WTC11 (cell line): ENCODE measurements at regions of chr3 and their contacts with region 1.

Region 1: DNA sequence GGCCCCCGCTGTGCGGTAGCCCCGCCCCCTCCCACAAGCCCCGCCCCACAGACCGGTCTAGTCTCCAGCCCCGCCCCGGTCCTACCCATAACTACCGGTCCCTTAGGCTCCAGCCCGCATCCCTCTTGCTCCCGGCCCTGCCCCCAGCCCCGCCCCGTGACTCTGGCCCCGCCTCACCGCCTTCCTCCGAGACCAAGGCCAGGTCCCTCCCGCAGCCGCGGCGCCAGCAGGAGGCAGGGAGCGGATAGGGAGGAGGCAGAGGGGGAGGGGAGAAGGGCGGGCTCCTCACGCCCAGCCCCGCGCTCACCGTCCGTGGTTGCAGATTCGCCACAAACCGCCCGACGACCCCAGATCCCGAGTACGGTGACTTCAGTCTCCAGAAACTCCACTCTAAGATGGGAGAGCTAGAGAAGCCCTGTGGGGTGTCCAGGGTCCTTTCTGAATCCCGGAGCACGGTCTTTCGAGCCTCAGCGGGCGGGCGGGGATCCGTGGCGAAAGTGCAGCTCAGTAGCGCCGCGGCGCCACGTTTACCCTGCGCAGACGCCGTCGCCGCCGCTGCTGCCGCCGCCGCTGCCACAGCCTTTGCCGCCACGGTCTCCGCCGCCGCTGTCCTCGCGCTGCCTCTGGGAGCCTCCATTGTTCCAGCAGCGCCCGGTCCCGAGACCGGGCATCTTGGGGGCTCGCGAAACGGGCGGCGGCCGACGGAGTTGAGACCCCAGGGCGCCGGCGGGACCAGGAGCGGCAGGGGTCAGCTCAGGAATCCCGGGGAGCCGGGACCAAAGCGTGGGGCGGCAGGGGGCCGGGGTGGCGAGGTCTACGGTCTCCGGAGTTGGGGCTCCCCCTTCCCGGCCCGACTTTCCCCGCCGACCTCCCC is at the start of gene BRPF1:
- DNase-seq: peak; percentile 99
- ATAC-seq: peak; percentile 94
- H3K4me3 Mint-ChIP-seq: peak within 1 kb of the TSS; percentile 91
- H3K27ac Mint-ChIP-seq: peak within 1 kb of the TSS; percentile 96
- H3K4me1 Mint-ChIP-seq: peaks cover 18% of the 10 kb centered on the region
- H3K27me3 Mint-ChIP-seq: no peaks in the 10 kb centered on the region
- CTCF ChIP-seq: no peak
- total RNA-seq, gene BRPF1: 20.4 to 22.8 TPM (median 21.4 TPM) in 3 replicates

Region 2: GRCh38 chr3:9503283-9503682 is 228.2 kb before region 1 on chr3:
- CTCF ChIA-PET with region 1: interaction called, 162 read pairs
- POLR2A ChIA-PET with region 1: interaction called, 3 read pairs
- DNase-seq: peak; percentile 95
- ATAC-seq: peak; percentile 61
- H3K4me3 Mint-ChIP-seq: no peak overlapping the region; the same call in 1 of the 2 replicates
- H3K27ac Mint-ChIP-seq: no peak overlapping the region
- H3K4me1 Mint-ChIP-seq: peaks cover 12% of the 10 kb centered on the region
- H3K27me3 Mint-ChIP-seq: peaks cover 51% of the 10 kb centered on the region
- CTCF ChIP-seq: peak; percentile 96

Region 3: DNA sequence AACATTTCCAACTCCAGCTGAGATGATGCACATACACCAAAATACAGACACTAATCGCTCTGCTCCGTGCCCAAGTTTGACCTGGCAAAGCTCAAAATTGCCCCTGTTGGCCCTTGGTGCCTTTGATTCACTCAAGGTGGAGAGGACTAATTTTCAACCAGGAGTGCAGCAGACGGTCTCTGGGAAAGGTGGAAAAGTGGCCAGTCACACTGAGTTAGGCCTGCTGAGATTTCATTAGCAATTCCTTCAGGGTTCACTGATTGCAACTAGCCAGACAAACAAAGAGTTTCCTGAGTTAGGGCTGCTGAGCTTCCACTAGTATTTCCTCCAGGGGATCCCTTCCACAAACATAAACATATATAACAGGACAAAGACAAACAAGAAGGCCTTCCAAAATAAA is 149.1 kb before region 1 on chr3:
- CTCF ChIA-PET with region 1: interaction called, 18 read pairs
- POLR2A ChIA-PET with region 1: no interaction called
- DNase-seq: no peak
- ATAC-seq: peak; percentile 85
- H3K4me3 Mint-ChIP-seq: peak overlapping the region; percentile 36
- H3K27ac Mint-ChIP-seq: peak overlapping the region; percentile 91
- H3K4me1 Mint-ChIP-seq: peaks cover 23% of the 10 kb centered on the region
- H3K27me3 Mint-ChIP-seq: peaks cover 5% of the 10 kb centered on the region
- CTCF ChIP-seq: no peak

Region 4: DNA sequence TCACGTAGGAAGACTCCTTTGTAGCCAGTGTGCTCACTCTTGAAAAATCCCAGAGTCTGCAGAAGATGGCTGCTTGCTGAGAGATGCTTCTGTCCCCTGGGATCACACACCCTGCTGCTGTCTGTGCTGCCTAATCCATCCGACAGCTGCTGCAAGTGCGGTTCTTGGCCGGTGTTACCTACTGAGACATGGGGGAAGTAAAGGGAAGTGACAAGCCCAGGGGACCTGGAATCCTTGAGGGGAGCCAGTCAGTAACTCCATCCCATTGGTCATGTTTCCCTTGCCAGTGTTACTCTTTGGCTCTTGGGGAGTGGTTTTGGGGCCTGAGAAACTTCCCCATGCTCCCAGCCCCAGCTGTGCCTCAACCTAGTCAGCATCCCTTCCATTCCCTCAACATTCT is 36.1 kb before region 1 on chr3:
- CTCF ChIA-PET with region 1: interaction called, 12 read pairs
- POLR2A ChIA-PET with region 1: no interaction called
- DNase-seq: no peak
- ATAC-seq: no peak
- H3K4me3 Mint-ChIP-seq: no peak overlapping the region
- H3K27ac Mint-ChIP-seq: no peak overlapping the region
- H3K4me1 Mint-ChIP-seq: no peaks in the 10 kb centered on the region
- H3K27me3 Mint-ChIP-seq: no peaks in the 10 kb centered on the region
- CTCF ChIP-seq: no peak

Region 5: DNA sequence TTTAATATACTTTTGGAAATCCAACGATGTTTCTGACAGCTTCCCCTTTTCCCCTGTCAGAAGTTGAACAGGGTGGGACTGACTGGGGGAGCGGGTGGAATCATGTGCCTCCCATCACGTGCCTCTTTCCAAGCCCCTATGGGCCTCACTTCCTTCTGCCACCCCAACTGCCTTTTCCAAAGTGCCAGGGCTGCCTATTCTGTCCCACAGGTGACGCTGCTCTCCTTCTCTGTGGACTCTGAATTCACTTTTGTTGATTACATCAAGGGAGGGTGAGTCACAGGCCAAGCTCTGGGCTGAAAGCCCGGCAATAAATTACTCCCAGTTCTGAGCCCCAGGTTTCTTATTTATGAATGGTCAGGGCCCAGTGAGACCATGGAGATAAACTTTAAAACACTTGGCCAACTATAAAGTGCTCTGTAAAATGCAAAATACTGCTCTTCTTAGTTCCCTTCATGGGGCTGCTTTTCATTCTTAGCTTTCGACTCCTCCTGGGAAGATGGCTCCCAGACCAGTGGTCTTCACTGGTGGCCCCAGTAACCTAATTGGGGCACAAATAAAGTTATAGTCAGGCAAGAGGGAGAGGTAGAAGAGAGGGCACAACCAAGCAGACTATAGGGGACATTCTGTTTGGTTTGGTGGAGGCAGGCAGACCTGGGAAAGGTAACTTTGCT is 15.5 kb before region 1 on chr3:
- CTCF ChIA-PET with region 1: interaction called, 72 read pairs
- POLR2A ChIA-PET with region 1: interaction called, 3 read pairs
- DNase-seq: no peak
- ATAC-seq: peak; percentile 21
- H3K4me3 Mint-ChIP-seq: no peak overlapping the region
- H3K27ac Mint-ChIP-seq: 0 out of 2 replicates have a peak overlapping the region, but pooled peaks have one; percentile 30
- H3K4me1 Mint-ChIP-seq: peaks cover 5% of the 10 kb centered on the region; the same call in 1 of the 2 replicates
- H3K27me3 Mint-ChIP-seq: peaks cover 29% of the 10 kb centered on the region
- CTCF ChIP-seq: no peak

Region 6: GRCh38 chr3:9769426-9770275 is 38.2 kb after region 1 on chr3 and contains the start of gene CAMK1:
- CTCF ChIA-PET with region 1: interaction called, 13 read pairs
- POLR2A ChIA-PET with region 1: no interaction called
- DNase-seq: peak; percentile 75
- ATAC-seq: peak; percentile 93
- H3K4me3 Mint-ChIP-seq: peak within 1 kb of the TSS; percentile 69
- H3K27ac Mint-ChIP-seq: no peak within 1 kb of the TSS
- H3K4me1 Mint-ChIP-seq: peaks cover 15% of the 10 kb centered on the region
- H3K27me3 Mint-ChIP-seq: peaks cover 79% of the 10 kb centered on the region
- CTCF ChIP-seq: no peak
- total RNA-seq, gene CAMK1: 3.1 to 6.6 TPM (median 5.9 TPM) in 3 replicates